A549 (cell line): ENCODE measurements at regions of chr4 and their contacts with region 1.

Region 1: GRCh38 chr4:86918539-86919072 is 16.2 kb upstream of the AFF1 start:
- DNase-seq: peak in 1 of 2 experiments; percentile 19
- ATAC-seq: peak; percentile 19 to 36; a peak in 1 of 6 replicates
- H3K4me3 ChIP-seq: no peak overlapping the region
- H3K27ac ChIP-seq: 0 out of 6 replicates have a peak overlapping the region, but pooled peaks of 1 of the 2 experiments have one; percentile 18
- H3K4me1 ChIP-seq: peaks cover 7% of the 10 kb centered on the region; the same call in 1 of the 3 replicates
- CTCF ChIP-seq: no peak
- EP300 ChIP-seq: no peak
- POLR2A ChIP-seq: no peak
- RAD21 ChIP-seq: no peak

Region 2: DNA sequence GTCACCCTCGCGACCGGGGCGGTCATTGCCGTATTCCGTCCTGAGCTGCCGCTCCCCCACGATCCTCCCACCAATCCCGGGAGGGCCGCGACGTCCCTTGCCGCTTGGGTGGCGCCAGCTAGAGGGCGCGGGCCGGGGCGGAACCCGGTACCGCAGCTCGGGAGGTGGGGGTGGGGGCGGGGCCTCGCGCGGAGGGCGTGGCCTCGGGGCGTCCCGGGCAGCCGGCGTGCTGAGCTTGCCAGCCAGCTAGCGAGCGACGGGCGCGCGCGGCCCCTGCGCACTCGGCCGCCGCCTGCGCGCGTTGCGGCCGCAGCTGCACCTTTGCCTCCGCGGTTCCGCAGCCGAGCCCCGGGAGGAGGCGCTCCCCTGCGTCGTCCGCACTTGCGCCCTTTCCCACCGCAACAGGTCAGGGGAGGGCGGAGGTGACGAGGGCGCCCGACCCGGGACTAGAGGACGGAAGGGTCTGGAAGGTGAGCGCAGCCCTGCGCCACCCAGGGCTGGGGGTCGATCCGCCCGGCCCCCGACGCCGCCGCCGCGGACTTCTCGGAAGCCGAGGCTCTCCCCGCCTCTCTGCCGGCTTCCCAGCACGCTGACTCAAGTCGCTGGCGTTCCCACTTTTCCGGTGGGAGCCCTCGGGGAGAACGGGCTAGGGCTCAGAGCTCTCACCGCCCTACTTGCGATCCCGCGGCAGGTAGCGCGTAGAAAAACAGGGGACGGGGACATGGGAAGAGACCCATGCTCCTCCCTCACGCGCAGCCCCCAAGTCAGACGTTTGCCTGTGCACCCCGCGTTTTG is 16.4 kb after region 1 on chr4 and contains the start of gene AFF1:
- CTCF ChIA-PET with region 1: interaction called, 18 read pairs
- POLR2A ChIA-PET with region 1: interaction called, 23 read pairs
- DNase-seq: peak; percentile 75 to 93
- ATAC-seq: peak; percentile 77 to 83
- H3K4me3 ChIP-seq: peak within 1 kb of the TSS; percentile 78
- H3K27ac ChIP-seq: peak within 1 kb of the TSS; percentile 89 to 98
- H3K4me1 ChIP-seq: peaks cover 40% of the 10 kb centered on the region
- CTCF ChIP-seq: peak; percentile 18; the same call in 1 of the 3 replicates
- EP300 ChIP-seq: no peak
- POLR2A ChIP-seq: peak; percentile 78
- RAD21 ChIP-seq: peak in 1 of 2 experiments; percentile 30; a peak in 1 of 5 replicates
- polyA plus RNA-seq, gene AFF1: 15.4 and 29.8 TPM in 2 replicates

Region 3: GRCh38 chr4:86981789-86982188 is 63.2 kb after region 1 on chr4:
- CTCF ChIA-PET with region 1: interaction called, 10 read pairs
- POLR2A ChIA-PET with region 1: no interaction called
- DNase-seq: no peak
- ATAC-seq: no peak
- H3K4me3 ChIP-seq: no peak overlapping the region
- H3K27ac ChIP-seq: no peak overlapping the region
- H3K4me1 ChIP-seq: peaks cover 24% of the 10 kb centered on the region
- CTCF ChIP-seq: no peak
- EP300 ChIP-seq: no peak
- POLR2A ChIP-seq: no peak
- RAD21 ChIP-seq: no peak

Region 4: DNA sequence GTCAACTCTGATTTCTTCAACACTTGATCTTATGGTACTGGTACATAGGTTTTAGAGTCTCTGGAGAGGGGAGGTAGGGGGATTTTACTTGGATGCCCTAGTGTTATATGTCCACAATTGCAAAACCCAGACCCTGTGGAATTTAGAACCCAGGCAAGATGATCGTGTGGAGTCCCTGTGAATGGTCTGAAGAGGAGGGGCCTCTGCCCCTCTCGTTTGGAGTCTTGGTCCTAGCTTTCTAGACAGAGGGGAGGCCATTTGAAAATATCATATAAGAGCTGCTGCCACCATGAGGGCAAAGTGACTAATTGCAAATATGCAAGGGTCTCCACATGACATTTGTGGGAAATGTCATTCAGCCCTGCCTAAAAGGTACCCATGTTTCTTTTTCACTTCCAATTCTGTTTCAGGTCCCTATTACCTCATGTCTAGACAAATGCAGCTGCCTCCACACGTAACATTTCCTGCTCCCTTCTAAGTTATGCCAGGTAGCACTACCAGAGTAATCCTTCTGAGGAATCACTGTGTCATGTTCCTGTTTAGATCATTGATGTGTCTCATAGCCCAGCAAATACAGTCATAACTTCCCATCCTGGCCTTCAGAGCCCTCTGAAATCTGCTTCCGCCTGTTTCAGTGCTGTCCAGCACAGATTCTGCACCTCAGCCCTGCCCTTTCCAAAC is 175.0 kb after region 1 on chr4:
- CTCF ChIA-PET with region 1: interaction called, 58 read pairs
- POLR2A ChIA-PET with region 1: interaction called, 3 read pairs
- DNase-seq: peak; percentile 55 to 56
- ATAC-seq: peak; percentile 78 to 85
- H3K4me3 ChIP-seq: no peak overlapping the region
- H3K27ac ChIP-seq: peak overlapping the region; percentile 66 to 82
- H3K4me1 ChIP-seq: peaks cover 38% of the 10 kb centered on the region
- CTCF ChIP-seq: peak; percentile 63
- EP300 ChIP-seq: no peak
- POLR2A ChIP-seq: no peak
- RAD21 ChIP-seq: peak; percentile 68 to 72

Region 5: DNA sequence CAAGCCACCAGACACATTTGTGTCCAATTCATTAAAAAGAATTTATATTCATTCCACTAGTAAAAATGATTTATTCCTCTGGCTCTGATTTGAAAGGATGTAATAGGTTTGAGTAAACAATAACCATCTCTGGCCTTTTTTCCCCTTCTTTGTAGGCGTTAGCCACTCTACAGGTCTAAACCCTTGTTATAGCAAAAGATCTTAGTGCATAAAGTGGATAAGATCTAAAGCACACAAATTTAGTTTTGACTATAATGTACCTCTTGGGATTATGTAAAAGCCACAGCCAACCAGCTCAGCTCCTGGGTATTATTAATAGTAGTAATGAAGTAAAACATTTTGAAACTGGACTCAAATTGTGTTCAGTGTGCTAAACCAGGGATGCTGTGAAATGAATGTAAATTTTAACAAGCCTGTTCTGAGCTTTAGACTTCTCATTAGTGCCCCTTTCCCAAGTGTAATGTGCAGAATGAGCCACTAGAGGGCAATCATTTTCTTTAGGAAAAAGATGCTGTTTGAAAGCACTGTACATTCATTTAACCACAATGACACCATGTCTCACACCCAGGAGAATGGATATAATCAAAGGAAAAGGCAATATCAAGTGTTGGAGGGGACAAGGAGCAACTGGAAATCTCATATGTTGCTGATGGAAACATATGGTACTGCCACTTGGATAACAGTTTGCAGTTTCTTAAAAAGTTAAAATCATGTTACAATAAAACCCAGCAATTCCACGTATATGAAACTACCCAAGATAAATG is 232.1 kb after region 1 on chr4:
- CTCF ChIA-PET with region 1: interaction called, 12 read pairs
- POLR2A ChIA-PET with region 1: no interaction called
- DNase-seq: peak; percentile 13 to 63
- ATAC-seq: peak; percentile 62 to 79; a peak in 4 of 6 replicates
- H3K4me3 ChIP-seq: no peak overlapping the region
- H3K27ac ChIP-seq: no peak overlapping the region
- H3K4me1 ChIP-seq: no peaks in the 10 kb centered on the region
- CTCF ChIP-seq: peak; percentile 72
- EP300 ChIP-seq: no peak
- POLR2A ChIP-seq: no peak
- RAD21 ChIP-seq: peak; percentile 70 to 76